Sciatic nerve (tissue), 2 donors: ENCODE measurements at regions of chr3 and their contacts with region 1.

Region 1: DNA sequence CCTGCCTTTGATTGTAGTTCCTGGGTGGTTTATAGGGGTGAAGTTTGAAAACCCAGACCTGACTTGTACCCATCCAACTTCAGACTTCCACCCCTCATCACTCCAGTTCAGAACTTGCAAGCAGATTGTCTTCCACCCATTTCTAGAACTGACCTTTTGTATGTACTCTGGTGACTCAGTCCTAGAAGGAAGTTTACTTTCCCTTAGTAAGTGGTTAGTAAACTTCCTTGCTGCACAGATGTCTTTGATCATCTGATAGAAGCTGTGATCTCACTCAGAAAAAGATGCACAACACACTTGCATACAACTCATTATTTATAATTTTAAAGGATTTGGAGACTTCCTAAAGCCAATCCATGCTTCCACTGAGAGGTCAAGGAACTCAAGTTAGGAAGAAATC is 368.0 kb downstream of the MFSD1 start:
- DNase-seq: no peak
- ATAC-seq: no peak

Region 2: DNA sequence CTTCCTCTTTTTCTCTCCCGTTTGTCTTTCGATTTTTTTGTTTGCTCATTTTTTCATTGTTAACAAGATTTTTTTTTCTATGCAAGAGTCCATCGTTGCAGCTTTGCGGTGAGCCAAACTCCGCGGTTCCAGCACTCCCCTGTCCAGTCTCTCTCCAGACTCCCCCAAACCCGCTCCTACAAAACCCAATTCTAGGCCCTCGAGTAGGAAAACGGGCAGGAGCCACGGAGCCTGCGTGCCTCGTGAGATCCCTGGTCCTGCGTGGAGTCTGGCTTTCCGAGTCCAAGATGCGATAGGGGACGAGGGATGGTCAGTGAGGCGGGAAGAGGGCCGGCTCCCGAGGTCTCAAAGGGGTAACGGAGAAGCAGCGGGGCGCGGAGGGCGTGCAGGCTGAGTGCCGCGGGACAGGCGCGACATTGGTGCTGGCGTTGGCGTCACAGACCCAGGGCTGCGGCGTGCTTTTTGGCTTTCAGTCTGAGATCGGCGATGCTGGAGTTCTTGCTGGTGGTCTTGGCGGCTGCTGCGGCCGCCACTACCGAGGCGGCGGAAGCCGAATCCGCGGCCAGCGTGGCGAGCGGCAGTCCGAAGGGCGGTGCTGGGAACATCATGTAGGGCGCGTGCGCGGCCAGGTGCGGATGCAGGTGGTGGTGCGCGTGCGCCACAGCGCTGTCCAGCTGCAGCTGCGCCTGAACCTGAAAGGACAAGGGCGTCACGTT is 1072.1 kb before region 1 on chr3:
- intact Hi-C with region 1: no loop called
- DNase-seq: peak; percentile 59
- ATAC-seq: peak; percentile 55

Region 3: GRCh38 chr3:159150180-159150579 is 19.6 kb before region 1 on chr3:
- intact Hi-C with region 1: no loop called
- DNase-seq: no peak
- ATAC-seq: no peak

Region 4: GRCh38 chr3:160343132-160343531 is 1173.3 kb after region 1 on chr3:
- intact Hi-C with region 1: loop called (anchors 10 kb)
- DNase-seq: no peak
- ATAC-seq: no peak